Activated CD4-positive, alpha-beta T cell treated with anti-CD3 and anti-CD28 coated beads, Interleukin-2, amount 10 ng/mL, durations not matched to agents 7 days and 5 days (primary cell): ENCODE measurements at regions of chr9 and their contacts with region 1.

Region 1: GRCh38 chr9:96875461-96876364 is 21.4 kb upstream of the ZNF782 start:
- DNase-seq: peak; percentile 64
- H3K4me3 Mint-ChIP-seq: peak overlapping the region; percentile 74
- H3K27ac Mint-ChIP-seq: peak overlapping the region; percentile 72
- H3K4me1 Mint-ChIP-seq: peaks cover 29% of the 10 kb centered on the region
- H3K27me3 Mint-ChIP-seq: peaks cover 37% of the 10 kb centered on the region

Region 2: GRCh38 chr9:96844040-96844439 is 31.7 kb before region 1 on chr9:
- CTCF ChIA-PET with region 1: no interaction called
- POLR2A ChIA-PET with region 1: no interaction called
- DNase-seq: no peak
- H3K4me3 Mint-ChIP-seq: no peak overlapping the region
- H3K27ac Mint-ChIP-seq: no peak overlapping the region
- H3K4me1 Mint-ChIP-seq: peaks cover 18% of the 10 kb centered on the region
- H3K27me3 Mint-ChIP-seq: no peaks in the 10 kb centered on the region

Region 3: GRCh38 chr9:96856363-96857286 is 19.1 kb before region 1 on chr9:
- CTCF ChIA-PET with region 1: interaction called, 11 read pairs
- POLR2A ChIA-PET with region 1: no interaction called
- DNase-seq: peak; percentile 78
- H3K4me3 Mint-ChIP-seq: no peak overlapping the region
- H3K27ac Mint-ChIP-seq: no peak overlapping the region
- H3K4me1 Mint-ChIP-seq: peaks cover 28% of the 10 kb centered on the region
- H3K27me3 Mint-ChIP-seq: peaks cover 19% of the 10 kb centered on the region

Region 4: DNA sequence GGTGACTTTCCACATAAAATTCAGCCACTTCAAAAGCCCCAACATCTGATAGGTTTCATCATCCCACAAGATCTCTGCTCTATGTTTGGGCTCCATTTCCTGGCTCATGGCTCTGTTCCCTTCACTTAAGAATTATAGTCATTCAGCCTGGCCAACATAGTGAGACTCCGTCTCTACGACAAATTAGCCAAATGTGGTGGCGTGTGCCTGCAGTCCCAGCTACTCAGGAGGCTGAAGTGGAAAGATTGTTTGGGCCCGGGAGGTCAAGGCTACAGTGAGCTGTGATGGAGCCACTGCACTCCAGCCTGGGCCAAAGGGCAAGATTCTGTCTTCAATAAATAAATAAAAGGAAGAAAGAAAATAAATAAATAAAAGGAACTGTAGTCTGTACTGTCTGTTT is 221.1 kb after region 1 on chr9:
- CTCF ChIA-PET with region 1: no interaction called
- POLR2A ChIA-PET with region 1: no interaction called
- DNase-seq: no peak
- H3K4me3 Mint-ChIP-seq: no peak overlapping the region
- H3K27ac Mint-ChIP-seq: no peak overlapping the region
- H3K4me1 Mint-ChIP-seq: no peaks in the 10 kb centered on the region
- H3K27me3 Mint-ChIP-seq: peaks cover 8% of the 10 kb centered on the region